Cardiac septum (tissue), 1 donor: ENCODE measurements at regions of chr3 and their contacts with region 1.

Region 1: DNA sequence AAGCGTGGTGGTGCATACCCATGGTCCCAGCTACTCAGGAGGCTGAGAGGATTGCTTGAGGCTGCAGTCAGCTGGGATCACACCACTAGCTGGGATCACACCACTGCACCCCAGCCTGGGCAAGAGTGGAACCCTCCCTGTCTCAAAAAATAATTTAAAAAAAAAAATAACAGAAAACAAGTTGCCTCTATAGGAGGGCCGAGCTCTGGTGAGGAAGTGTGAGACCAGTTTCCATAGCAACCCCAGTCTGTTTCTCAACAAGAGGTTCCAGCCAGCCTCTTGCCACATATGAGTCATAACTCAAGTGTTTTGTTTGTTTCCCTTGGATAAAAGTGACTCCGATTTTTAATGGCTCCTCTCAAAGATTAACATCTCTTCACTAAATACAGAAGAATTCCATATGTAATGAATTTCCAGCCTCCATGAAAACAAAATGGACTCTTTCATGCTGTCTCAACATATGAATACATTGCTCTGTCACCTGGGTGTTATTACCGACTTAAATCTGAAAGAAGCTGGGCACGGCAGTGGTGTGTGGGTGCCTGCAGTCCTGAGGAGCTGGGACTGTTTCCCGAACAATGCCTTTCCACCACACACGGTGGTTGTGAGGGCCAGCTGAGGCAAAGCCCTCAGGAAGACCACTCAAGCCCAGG is 19.7 kb downstream of the TMEM43 start:
- DNase-seq: peak; percentile 78

Region 2: GRCh38 chr3:13770170-13771169 is 374.1 kb before region 1 on chr3:
- intact Hi-C with region 1: no loop called
- DNase-seq: peak; percentile 38

Region 3: DNA sequence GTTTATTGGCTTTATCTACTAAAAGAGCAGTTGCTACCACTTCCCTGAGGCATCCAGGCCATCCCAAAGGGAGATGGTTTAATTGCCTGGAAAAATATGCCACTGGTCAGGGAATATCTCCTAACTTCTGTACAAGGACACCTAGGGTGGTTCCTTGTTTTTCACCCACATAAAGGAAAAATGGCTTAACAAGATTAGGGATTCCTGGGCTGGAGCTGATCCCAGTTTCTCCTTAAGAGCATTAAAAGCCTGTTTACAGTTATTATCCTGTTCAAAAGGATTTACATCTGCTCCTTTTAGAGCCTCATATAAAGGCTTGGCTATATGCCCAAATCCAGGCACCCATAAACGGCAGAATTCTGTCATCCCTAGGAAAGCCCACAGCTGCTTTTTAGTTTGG is 194.5 kb before region 1 on chr3:
- intact Hi-C with region 1: no loop called
- DNase-seq: no peak

Region 4: DNA sequence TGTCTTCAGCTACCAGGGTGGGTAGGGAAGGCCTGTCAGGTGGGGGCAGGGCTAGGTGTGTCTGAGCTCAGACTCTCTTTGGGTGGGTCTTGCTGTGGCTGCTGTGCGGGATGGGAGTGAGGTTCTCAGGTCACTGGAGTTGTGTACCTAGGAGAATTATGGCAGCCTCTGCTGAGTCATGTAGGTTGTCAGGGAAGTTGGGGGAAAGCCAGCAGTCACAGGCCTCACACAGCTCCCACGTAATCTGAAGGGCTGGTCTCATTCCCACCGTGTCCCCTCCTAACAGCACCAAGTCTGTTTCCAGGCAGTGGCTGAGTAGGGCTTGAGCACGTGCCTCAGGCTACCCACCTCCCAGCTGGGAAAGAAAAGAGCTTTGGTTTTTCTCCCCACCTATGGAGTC is 86.8 kb before region 1 on chr3:
- intact Hi-C with region 1: no loop called
- DNase-seq: no peak

Region 5: GRCh38 chr3:14178247-14179113 is 33.9 kb after region 1 on chr3 and contains the starts of genes LSM3 and XPC:
- intact Hi-C with region 1: loop called (anchors 1 kb)
- DNase-seq: peak; percentile 99
- total RNA-seq, gene LSM3: 13.2 TPM
- total RNA-seq, gene XPC: 16.7 TPM